ENCODE measurements at regions of chr16 and their contacts with region 1.

Region 1: GRCh38 chr16:83143788-83144187 is 517.0 kb downstream of the CDH13 start:
- DNase-seq: no peak
- ATAC-seq: no peak; the same call in 1 of the 2 replicates
- H3K4me3 Mint-ChIP-seq: no peak overlapping the region
- H3K27ac Mint-ChIP-seq: no peak overlapping the region
- H3K4me1 Mint-ChIP-seq: no peaks in the 10 kb centered on the region
- H3K27me3 Mint-ChIP-seq: no peaks in the 10 kb centered on the region
- CTCF ChIP-seq: no peak

Region 2: GRCh38 chr16:82895843-82896242 is 247.9 kb before region 1 on chr16:
- CTCF ChIA-PET with region 1: no interaction called
- POLR2A ChIA-PET with region 1: interaction called, 11 read pairs
- DNase-seq: no peak
- ATAC-seq: no peak
- H3K4me3 Mint-ChIP-seq: no peak overlapping the region
- H3K27ac Mint-ChIP-seq: no peak overlapping the region
- H3K4me1 Mint-ChIP-seq: no peaks in the 10 kb centered on the region
- H3K27me3 Mint-ChIP-seq: no peaks in the 10 kb centered on the region
- CTCF ChIP-seq: no peak

Region 3: GRCh38 chr16:83176802-83177201 is 33.0 kb after region 1 on chr16:
- CTCF ChIA-PET with region 1: no interaction called
- POLR2A ChIA-PET with region 1: no interaction called
- DNase-seq: no peak
- ATAC-seq: no peak
- H3K4me3 Mint-ChIP-seq: no peak overlapping the region
- H3K27ac Mint-ChIP-seq: no peak overlapping the region
- H3K4me1 Mint-ChIP-seq: no peaks in the 10 kb centered on the region
- H3K27me3 Mint-ChIP-seq: no peaks in the 10 kb centered on the region
- CTCF ChIP-seq: no peak

Region 4: DNA sequence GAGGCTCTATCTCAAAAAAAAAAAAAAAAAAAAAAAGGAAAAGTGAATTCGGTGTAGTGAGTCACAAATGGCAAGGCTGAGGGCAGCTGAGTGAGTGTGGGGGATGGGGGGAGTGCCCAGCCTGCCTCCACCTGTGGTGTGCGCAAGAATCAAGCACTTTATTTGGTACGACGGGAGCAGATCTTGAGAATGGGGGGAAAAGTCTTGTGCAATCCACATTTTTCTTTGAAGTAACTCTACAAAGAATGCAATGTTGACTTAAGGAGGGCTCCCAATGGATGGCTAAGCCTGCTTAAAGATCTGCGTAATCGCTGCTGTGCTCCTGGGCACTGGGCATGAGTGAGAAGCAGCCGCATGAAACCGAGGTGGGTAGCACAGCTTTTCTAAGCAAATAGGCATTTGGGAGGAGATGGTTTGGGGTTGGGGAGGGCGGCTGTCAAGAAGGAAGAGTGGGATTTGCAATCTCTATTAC is 1252.8 kb after region 1 on chr16:
- CTCF ChIA-PET with region 1: no interaction called
- POLR2A ChIA-PET with region 1: interaction called, 12 read pairs
- DNase-seq: no peak
- ATAC-seq: peak; percentile 44
- H3K4me3 Mint-ChIP-seq: no peak overlapping the region
- H3K27ac Mint-ChIP-seq: no peak overlapping the region
- H3K4me1 Mint-ChIP-seq: peaks cover 20% of the 10 kb centered on the region
- H3K27me3 Mint-ChIP-seq: no peaks in the 10 kb centered on the region; the same call in 1 of the 2 replicates
- CTCF ChIP-seq: no peak